ENCODE measurements at regions of chr4 and their contacts with region 1.

Region 1: DNA sequence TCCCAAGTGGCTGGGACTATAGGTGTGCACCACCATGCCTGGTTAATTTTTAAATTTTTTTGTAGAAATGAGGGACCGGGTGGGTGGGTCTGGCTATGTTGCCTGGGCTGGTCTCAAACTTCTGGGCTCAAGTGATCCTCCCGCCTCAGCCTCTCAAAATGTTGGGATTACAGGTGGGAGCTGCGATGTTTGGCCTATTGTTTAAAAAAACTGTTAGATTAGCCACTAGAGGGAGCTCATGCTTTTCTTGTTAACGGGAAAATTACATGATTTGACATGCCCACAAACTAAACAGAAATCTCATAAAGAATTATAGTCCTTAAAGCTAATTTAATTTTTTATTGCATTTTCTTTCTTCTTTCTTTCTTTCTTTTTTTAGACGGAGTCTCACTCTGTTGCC is 5.0 kb upstream of the SDAD1 start:
- DNase-seq: no peak
- ATAC-seq: peak in 1 of 2 donors; percentile 41
- H3K4me3 ChIP-seq: no peak overlapping the region
- H3K27ac ChIP-seq: no peak overlapping the region
- H3K4me1 ChIP-seq: peaks cover 0 to 6% of the 10 kb centered on the region in 2 donors
- H3K27me3 ChIP-seq: no peaks in the 10 kb centered on the region
- CTCF ChIP-seq: peak; percentile 62 to 76 (median 65)
- POLR2A ChIP-seq: no peak

Region 2: DNA sequence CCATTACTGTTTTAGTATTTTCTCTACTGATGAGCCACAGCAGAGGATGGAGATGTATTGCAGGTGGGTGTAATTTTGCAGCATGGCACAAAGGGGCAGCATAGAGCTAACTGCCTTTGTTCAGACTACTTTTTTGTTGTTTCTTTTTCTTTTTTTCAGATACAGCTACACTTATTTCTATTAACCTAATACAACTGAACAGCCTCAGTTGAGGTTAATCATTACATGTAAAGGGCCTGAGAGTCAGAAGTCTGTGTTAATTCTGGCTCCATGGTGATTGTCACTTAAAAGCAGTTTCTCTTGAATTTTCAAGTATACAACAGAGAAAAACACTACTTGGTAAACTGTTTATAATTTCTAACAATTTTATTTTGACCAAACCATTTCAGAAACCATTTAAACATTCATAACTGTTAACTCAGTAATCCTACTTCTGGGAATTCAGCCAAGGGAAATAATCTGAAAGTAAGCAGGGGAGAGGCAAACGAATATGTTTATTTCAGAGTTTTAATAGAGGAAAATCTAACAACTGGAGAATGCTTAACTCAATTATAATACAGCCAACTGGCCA is 79.6 kb before region 1 on chr4:
- in situ Hi-C with region 1: no loop called
- intact Hi-C with region 1: no loop called
- DNase-seq: no peak
- ATAC-seq: no peak
- H3K4me3 ChIP-seq: no peak overlapping the region
- H3K27ac ChIP-seq: no peak overlapping the region
- H3K4me1 ChIP-seq: no peaks in the 10 kb centered on the region
- H3K27me3 ChIP-seq: no peaks in the 10 kb centered on the region
- CTCF ChIP-seq: peak in 3 of 5 experiments; percentile 39 to 63 (median 41)
- POLR2A ChIP-seq: no peak

Region 3: GRCh38 chr4:76067652-76068286 is 72.0 kb after region 1 on chr4:
- in situ Hi-C with region 1: loop called (anchors 5 kb)
- intact Hi-C with region 1: loop called (anchors 1 kb)
- DNase-seq: peak; percentile 35 to 50
- ATAC-seq: peak; percentile 87 to 91
- H3K4me3 ChIP-seq: no peak overlapping the region
- H3K27ac ChIP-seq: no peak overlapping the region
- H3K4me1 ChIP-seq: peaks cover 0 to 3% of the 10 kb centered on the region in 2 donors
- H3K27me3 ChIP-seq: no peaks in the 10 kb centered on the region
- CTCF ChIP-seq: peak; percentile 62 to 86 (median 74)
- POLR2A ChIP-seq: no peak

Region 4: GRCh38 chr4:76074468-76074867 is 78.7 kb after region 1 on chr4 and contains the start of gene ART3:
- in situ Hi-C with region 1: loop called (anchors 5 kb)
- intact Hi-C with region 1: loop called (anchors 2 kb)
- DNase-seq: peak; percentile 71 to 77
- ATAC-seq: peak; percentile 76 to 82
- H3K4me3 ChIP-seq: peak within 1 kb of the TSS; percentile 44 to 61 (median 50)
- H3K27ac ChIP-seq: peak within 1 kb of the TSS; percentile 80 to 93 (median 84)
- H3K4me1 ChIP-seq: peaks cover 29 to 36% of the 10 kb centered on the region in 2 donors
- H3K27me3 ChIP-seq: no peaks in the 10 kb centered on the region
- CTCF ChIP-seq: no peak
- POLR2A ChIP-seq: peak; percentile 28 to 90
- total RNA-seq, gene ART3: 55.2 to 91.0 (median 83.4) TPM